ENCODE measurements at regions of chr18 and their contacts with region 1.

Region 1: DNA sequence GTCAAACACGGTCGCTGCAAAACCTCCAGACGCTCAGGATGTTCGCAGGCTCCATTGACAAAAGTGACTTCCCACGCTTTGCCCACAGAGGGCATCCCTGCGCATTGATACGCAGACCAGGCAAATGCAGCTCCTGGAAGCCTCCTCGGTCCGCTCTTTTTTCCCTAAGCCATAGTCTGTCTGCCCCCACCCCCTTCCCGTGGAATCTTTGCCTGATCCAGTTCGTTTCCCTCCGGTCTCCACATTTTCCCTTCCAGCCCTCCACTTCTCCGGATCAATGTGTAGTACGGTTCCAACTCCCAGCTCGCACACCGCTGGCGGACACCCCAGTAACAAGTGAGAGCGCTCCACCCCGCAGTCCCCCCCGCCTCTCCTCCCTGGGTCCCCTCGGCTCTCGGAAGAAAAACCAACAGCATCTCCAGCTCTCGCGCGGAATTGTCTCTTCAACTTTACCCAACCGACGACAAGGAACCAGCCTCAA is at the start of gene DCC:
- DNase-seq: no peak
- CTCF ChIP-seq: peak; percentile 32

Region 2: DNA sequence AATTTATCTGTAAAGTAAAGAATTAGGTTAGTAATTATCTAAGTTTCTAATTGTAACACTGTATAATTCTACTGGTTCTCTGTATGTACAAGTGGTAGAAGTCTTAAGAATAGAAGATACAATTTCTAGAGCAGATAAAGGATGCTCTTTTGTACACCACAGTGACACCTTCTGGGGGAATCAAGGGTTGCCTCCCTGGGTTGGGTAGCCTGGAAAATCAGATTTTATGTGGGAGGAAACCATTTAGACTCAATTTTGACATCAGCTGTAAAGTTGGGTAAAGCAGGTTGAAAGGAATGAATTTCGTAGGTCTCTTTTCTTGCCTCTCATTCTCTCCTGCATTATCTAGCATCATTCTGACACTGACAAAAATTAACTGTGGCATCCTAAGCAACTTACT is 354.9 kb after region 1 on chr18:
- in situ Hi-C with region 1: loop called (anchors 25 kb)
- DNase-seq: no peak
- CTCF ChIP-seq: peak; percentile 16